ENCODE measurements at regions of chr6 and their contacts with region 1.

Region 1: GRCh38 chr6:38997128-38997761 is 51.3 kb upstream of the GLP1R start:
- DNase-seq: peak; percentile 52 to 70 (median 58)
- ATAC-seq: peak; percentile 89
- H3K4me3 ChIP-seq: no peak overlapping the region
- H3K27ac ChIP-seq: no peak overlapping the region
- H3K4me1 ChIP-seq: no peaks in the 10 kb centered on the region
- H3K27me3 ChIP-seq: peaks cover 32 to 34% of the 10 kb centered on the region in 2 experiments
- CTCF ChIP-seq: peak; percentile 82 to 91 (median 88)
- EP300 ChIP-seq: no peak
- POLR2A ChIP-seq: no peak
- RAD21 ChIP-seq: peak; percentile 85 to 93

Region 2: GRCh38 chr6:39102071-39102820 is 105.0 kb after region 1 on chr6:
- CTCF ChIA-PET with region 1: interaction called, 7 read pairs
- POLR2A ChIA-PET with region 1: interaction called, 18 read pairs
- in situ Hi-C with region 1: no loop called
- intact Hi-C with region 1: loop called (anchors 1 kb)
- DNase-seq: peak; percentile 79 to 89 (median 85)
- ATAC-seq: peak; percentile 99
- H3K4me3 ChIP-seq: no peak overlapping the region
- H3K27ac ChIP-seq: no peak overlapping the region
- H3K4me1 ChIP-seq: no peaks in the 10 kb centered on the region
- H3K27me3 ChIP-seq: peaks cover 5 to 10% of the 10 kb centered on the region in 2 experiments; a peak in 2 of 5 replicates
- CTCF ChIP-seq: peak; percentile 88 to 91 (median 91)
- EP300 ChIP-seq: no peak
- POLR2A ChIP-seq: no peak
- RAD21 ChIP-seq: peak; percentile 77 to 92

Region 3: GRCh38 chr6:39153766-39154397 is 156.6 kb after region 1 on chr6:
- CTCF ChIA-PET with region 1: no interaction called
- POLR2A ChIA-PET with region 1: no interaction called
- in situ Hi-C with region 1: no loop called
- intact Hi-C with region 1: loop called (anchors 5 kb)
- DNase-seq: no peak
- ATAC-seq: no peak
- H3K4me3 ChIP-seq: no peak overlapping the region
- H3K27ac ChIP-seq: no peak overlapping the region
- H3K4me1 ChIP-seq: no peaks in the 10 kb centered on the region
- H3K27me3 ChIP-seq: peaks cover 4 to 5% of the 10 kb centered on the region in 2 experiments; a peak in 3 of 5 replicates
- CTCF ChIP-seq: no peak
- EP300 ChIP-seq: no peak
- POLR2A ChIP-seq: no peak
- RAD21 ChIP-seq: no peak

Region 4: GRCh38 chr6:39166189-39166911 is 169.1 kb after region 1 on chr6:
- CTCF ChIA-PET with region 1: no interaction called
- POLR2A ChIA-PET with region 1: no interaction called
- in situ Hi-C with region 1: loop called (anchors 10 kb)
- intact Hi-C with region 1: no loop called
- DNase-seq: peak; percentile 89 to 95 (median 92)
- ATAC-seq: peak; percentile 99
- H3K4me3 ChIP-seq: no peak overlapping the region
- H3K27ac ChIP-seq: no peak overlapping the region
- H3K4me1 ChIP-seq: no peaks in the 10 kb centered on the region
- H3K27me3 ChIP-seq: no peaks in the 10 kb centered on the region; a peak in 2 of 5 replicates
- CTCF ChIP-seq: peak; percentile 97
- EP300 ChIP-seq: no peak
- POLR2A ChIP-seq: no peak
- RAD21 ChIP-seq: peak; percentile 98 to 100

Region 5: DNA sequence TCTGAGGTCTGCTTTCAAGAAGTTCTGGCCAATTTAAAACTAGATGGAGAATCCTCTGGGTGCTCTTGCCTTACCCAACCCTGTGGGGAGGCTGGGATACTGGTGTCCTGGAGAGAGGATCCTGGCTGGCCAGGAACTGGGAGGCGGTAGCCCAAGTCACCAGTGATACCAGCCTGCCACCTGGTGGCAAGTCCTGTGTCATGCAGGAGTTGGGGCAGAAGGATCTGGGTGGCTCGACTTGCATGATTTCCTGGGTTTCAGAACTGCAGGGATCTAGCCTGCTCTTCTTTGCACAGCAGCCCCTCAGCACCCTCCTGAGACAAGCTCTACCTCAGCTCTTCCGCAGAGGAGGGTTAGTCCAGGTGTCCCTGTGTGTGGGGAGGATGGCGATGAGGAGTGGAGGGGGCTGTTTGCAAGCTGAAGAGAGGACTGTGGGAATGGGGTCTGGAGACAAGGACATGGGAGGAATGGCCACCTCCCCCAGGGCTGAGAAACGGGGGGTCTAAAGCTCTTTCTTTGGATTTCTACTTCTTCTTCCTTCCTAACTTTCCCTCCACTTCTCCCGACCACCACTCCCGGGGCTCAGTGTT is 312.8 kb after region 1 on chr6:
- CTCF ChIA-PET with region 1: interaction called, 11 read pairs
- POLR2A ChIA-PET with region 1: interaction called, 4 read pairs
- in situ Hi-C with region 1: loop called (anchors 5 kb)
- intact Hi-C with region 1: loop called (anchors 1 kb)
- DNase-seq: peak; percentile 83 to 91 (median 89)
- ATAC-seq: peak; percentile 95
- H3K4me3 ChIP-seq: no peak overlapping the region
- H3K27ac ChIP-seq: no peak overlapping the region
- H3K4me1 ChIP-seq: peaks cover 0 to 13% of the 10 kb centered on the region in 2 experiments; a peak in 1 of 5 replicates
- H3K27me3 ChIP-seq: peaks cover 3 to 57% of the 10 kb centered on the region in 2 experiments; a peak in 4 of 5 replicates
- CTCF ChIP-seq: peak; percentile 92 to 97 (median 97)
- EP300 ChIP-seq: no peak
- POLR2A ChIP-seq: no peak
- RAD21 ChIP-seq: peak; percentile 96 to 98

Measured in K562 (cell line).